AG04450 (cell line): ENCODE measurements at regions of chr2 and their contacts with region 1.

Region 1: GRCh38 chr2:231601349-231602229 is 8.9 kb downstream of the TEX44 start:
- DNase-seq: peak; percentile 48
- H3K4me3 ChIP-seq: no peak overlapping the region
- H3K27ac ChIP-seq: no peak overlapping the region
- H3K27me3 ChIP-seq: no peaks in the 10 kb centered on the region
- CTCF ChIP-seq: peak; percentile 90

Region 2: DNA sequence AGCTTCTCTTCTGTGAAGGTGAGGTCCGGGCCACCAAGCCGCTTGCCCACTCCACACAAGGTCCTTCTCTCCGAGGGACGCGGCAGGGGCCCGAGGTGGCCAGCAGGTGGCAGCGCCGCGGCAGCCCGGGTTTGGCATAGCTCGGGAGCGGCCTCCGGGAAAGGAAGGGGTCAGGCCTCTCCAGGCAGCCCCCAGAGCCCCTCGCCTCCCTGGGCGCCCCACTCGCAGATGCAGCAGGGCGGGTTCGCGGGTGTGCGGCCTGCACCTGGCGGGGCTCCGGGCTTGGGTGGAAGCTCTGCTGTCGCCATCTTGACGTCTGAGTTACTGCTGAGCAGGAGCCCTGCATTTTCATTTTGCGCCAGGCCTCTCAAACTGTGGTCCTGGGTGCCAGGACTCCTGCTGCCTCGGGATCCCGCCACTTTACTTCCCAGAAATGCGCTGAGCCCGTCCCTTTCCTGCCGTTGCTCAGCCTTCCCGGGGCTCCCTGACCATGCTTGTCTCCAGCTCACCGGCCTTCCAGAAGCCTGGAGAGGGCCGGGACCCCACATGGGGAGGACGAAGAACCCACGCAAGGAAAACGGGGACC is 118.7 kb before region 1 on chr2:
- CTCF ChIA-PET with region 1: interaction called, 13 read pairs
- POLR2A ChIA-PET with region 1: no interaction called
- DNase-seq: no peak
- H3K4me3 ChIP-seq: peak overlapping the region; percentile 17; the same call in 1 of the 2 replicates
- H3K27ac ChIP-seq: no peak overlapping the region
- H3K27me3 ChIP-seq: peaks cover 6% of the 10 kb centered on the region
- CTCF ChIP-seq: peak; percentile 89

Region 3: GRCh38 chr2:231522799-231523180 is 78.8 kb before region 1 on chr2:
- CTCF ChIA-PET with region 1: interaction called, 15 read pairs
- POLR2A ChIA-PET with region 1: no interaction called
- DNase-seq: peak; percentile 51
- H3K4me3 ChIP-seq: no peak overlapping the region
- H3K27ac ChIP-seq: peak overlapping the region; percentile 61
- H3K27me3 ChIP-seq: no peaks in the 10 kb centered on the region
- CTCF ChIP-seq: no peak

Region 4: GRCh38 chr2:231573698-231574421 is 27.7 kb before region 1 on chr2:
- CTCF ChIA-PET with region 1: interaction called, 10 read pairs
- POLR2A ChIA-PET with region 1: no interaction called
- DNase-seq: no peak
- H3K4me3 ChIP-seq: no peak overlapping the region
- H3K27ac ChIP-seq: no peak overlapping the region
- H3K27me3 ChIP-seq: peaks cover 14% of the 10 kb centered on the region
- CTCF ChIP-seq: no peak

Region 5: GRCh38 chr2:231590619-231591018 is 11.0 kb before region 1 on chr2:
- CTCF ChIA-PET with region 1: interaction called, 17 read pairs
- POLR2A ChIA-PET with region 1: no interaction called
- DNase-seq: no peak
- H3K4me3 ChIP-seq: no peak overlapping the region
- H3K27ac ChIP-seq: no peak overlapping the region
- H3K27me3 ChIP-seq: peaks cover 10% of the 10 kb centered on the region
- CTCF ChIP-seq: no peak

Region 6: DNA sequence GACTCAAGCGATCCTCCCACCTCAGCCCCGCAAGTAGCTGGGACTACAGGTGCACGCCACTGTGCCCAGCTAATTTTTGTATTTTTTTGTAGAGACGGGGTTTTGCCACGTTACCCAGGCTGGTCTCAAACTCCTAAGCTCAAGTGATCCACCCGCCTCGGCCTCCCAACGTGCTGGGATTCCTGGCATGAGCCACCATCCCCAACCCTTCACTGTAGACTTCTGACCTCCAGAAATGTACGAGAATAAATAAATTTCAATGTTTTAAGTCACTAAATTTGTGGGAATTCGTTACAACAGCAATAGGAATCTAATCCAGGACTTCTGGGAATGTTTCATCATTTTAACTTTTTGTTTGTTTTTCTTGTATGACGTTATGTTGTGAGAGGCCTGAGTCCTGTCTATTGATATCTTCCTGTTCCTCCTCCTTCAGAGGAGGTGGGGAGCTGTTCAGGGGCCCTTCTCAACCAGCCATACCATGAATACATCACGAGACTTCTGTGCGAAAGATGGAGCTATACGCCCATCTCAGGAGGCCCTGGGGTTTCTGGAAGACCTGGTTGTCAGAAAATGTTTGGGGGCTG is 31.1 kb after region 1 on chr2:
- CTCF ChIA-PET with region 1: interaction called, 16 read pairs
- POLR2A ChIA-PET with region 1: no interaction called
- DNase-seq: peak; percentile 77
- H3K4me3 ChIP-seq: no peak overlapping the region
- H3K27ac ChIP-seq: peak overlapping the region; percentile 84
- H3K27me3 ChIP-seq: no peaks in the 10 kb centered on the region
- CTCF ChIP-seq: no peak

Region 7: GRCh38 chr2:231910771-231911170 is 309.2 kb after region 1 on chr2:
- CTCF ChIA-PET with region 1: no interaction called
- POLR2A ChIA-PET with region 1: no interaction called
- DNase-seq: no peak
- H3K4me3 ChIP-seq: no peak overlapping the region
- H3K27ac ChIP-seq: no peak overlapping the region
- H3K27me3 ChIP-seq: peaks cover 15% of the 10 kb centered on the region
- CTCF ChIP-seq: no peak

Region 8: GRCh38 chr2:232103140-232103737 is 501.6 kb after region 1 on chr2:
- CTCF ChIA-PET with region 1: no interaction called
- POLR2A ChIA-PET with region 1: no interaction called
- DNase-seq: no peak
- H3K4me3 ChIP-seq: no peak overlapping the region
- H3K27ac ChIP-seq: no peak overlapping the region
- H3K27me3 ChIP-seq: no peaks in the 10 kb centered on the region
- CTCF ChIP-seq: no peak